Endothelial cell of umbilical vein (primary cell): ENCODE measurements at regions of chr9 and their contacts with region 1.

Region 1: DNA sequence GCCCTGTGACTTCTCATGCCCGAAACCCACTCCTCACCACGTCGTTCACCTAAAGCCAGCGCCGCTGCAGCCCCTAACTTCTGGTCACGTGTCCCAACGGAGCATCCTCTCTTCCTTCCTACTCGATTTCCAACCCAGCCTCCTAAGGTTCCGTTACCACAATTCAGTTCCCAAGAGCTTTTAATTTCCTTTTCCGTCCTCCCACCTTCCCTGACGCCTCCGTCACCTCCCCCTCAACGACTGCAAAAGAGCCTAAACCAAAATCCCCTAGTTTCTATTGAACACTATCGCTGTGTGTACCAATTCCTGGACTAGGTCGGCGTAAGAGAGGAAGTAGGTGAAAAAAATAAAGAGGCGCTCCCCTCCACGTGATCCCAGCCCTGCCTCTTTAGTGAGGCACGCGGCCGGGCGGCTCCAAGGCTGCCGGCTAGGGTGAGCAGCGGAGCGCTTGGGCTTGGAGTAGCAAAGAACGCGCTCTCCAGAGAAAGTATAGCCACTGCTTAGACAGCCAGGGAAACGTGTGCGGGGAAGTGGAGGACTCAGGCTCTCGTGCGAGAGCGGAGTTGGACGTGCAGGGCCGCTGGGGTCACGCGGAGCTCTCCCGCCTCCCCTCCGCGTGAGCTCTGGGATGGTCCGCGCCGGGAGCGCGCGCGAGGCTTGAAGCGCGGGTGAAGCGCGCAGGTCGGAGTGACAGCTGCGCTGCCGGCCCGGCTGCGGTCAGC is at the starts of genes CENPP and NOL8:
- DNase-seq: peak; percentile 93
- H3K4me3 ChIP-seq: peak within 1 kb of the TSS; percentile 32 to 91 (median 67)
- H3K27ac ChIP-seq: peak within 1 kb of the TSS; percentile 89
- H3K4me1 ChIP-seq: peaks cover 13% of the 10 kb centered on the region
- H3K27me3 ChIP-seq: no peaks in the 10 kb centered on the region
- CTCF ChIP-seq: no peak
- POLR2A ChIP-seq: peak; percentile 85
- total RNA-seq, gene CENPP: 8.7 and 12.0 TPM in 2 replicates
- total RNA-seq, gene NOL8: 36.1 and 41.6 TPM in 2 replicates

Region 2: GRCh38 chr9:92234514-92234913 is 90.9 kb before region 1 on chr9:
- CTCF ChIA-PET with region 1: no interaction called
- POLR2A ChIA-PET with region 1: no interaction called
- dilution Hi-C with region 1: no loop called
- intact Hi-C with region 1: no loop called
- DNase-seq: no peak
- H3K4me3 ChIP-seq: no peak overlapping the region
- H3K27ac ChIP-seq: no peak overlapping the region
- H3K4me1 ChIP-seq: no peaks in the 10 kb centered on the region
- H3K27me3 ChIP-seq: no peaks in the 10 kb centered on the region
- CTCF ChIP-seq: no peak
- POLR2A ChIP-seq: no peak

Region 3: GRCh38 chr9:92293452-92294296 is 31.8 kb before region 1 on chr9 and contains the start of gene IARS1:
- CTCF ChIA-PET with region 1: interaction called, 3 read pairs
- POLR2A ChIA-PET with region 1: no interaction called
- dilution Hi-C with region 1: no loop called
- intact Hi-C with region 1: loop called (anchors 1 kb)
- DNase-seq: peak; percentile 99
- H3K4me3 ChIP-seq: peak within 1 kb of the TSS; percentile 76 to 98 (median 78)
- H3K27ac ChIP-seq: peak within 1 kb of the TSS; percentile 64
- H3K4me1 ChIP-seq: peaks cover 23% of the 10 kb centered on the region
- H3K27me3 ChIP-seq: no peaks in the 10 kb centered on the region
- CTCF ChIP-seq: peak in 1 of 2 donors; percentile 40
- POLR2A ChIP-seq: peak; percentile 97
- total RNA-seq, gene IARS1: 130 and 132 TPM in 2 replicates

Region 4: DNA sequence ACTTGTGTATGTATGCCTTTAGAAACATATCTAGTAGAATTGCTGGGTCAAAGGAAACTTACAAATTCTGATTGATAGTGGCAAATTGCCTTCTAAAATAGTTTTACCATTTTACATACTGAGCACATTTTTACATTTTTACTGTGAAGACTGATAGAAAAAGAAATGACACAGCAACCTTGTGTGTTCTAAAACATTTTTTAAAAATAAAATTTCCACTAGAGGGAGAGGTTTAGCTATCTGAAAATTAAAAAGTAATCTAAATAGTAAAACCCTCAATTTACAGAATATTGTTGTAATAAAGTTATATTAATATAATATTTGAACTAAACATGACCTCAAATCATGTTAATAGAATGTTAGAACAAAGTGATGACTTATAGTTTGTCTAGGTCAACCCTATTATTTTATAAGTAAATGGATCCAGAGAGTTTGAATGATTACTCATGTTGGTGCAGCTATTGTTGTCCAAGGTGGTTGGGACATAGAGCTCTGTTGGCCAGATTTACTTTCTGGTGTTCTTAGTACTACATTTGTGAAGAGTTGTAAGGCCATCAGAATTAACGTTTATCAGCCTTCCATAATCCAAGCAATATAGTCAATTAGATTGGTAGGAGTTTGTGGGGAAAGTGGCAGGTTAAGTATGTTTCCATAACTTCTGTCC is 17.5 kb after region 1 on chr9:
- CTCF ChIA-PET with region 1: interaction called, 10 read pairs
- POLR2A ChIA-PET with region 1: no interaction called
- dilution Hi-C with region 1: no loop called
- intact Hi-C with region 1: no loop called
- DNase-seq: peak; percentile 6
- H3K4me3 ChIP-seq: no peak overlapping the region
- H3K27ac ChIP-seq: no peak overlapping the region
- H3K4me1 ChIP-seq: no peaks in the 10 kb centered on the region
- H3K27me3 ChIP-seq: no peaks in the 10 kb centered on the region
- CTCF ChIP-seq: no peak
- POLR2A ChIP-seq: no peak

Region 5: DNA sequence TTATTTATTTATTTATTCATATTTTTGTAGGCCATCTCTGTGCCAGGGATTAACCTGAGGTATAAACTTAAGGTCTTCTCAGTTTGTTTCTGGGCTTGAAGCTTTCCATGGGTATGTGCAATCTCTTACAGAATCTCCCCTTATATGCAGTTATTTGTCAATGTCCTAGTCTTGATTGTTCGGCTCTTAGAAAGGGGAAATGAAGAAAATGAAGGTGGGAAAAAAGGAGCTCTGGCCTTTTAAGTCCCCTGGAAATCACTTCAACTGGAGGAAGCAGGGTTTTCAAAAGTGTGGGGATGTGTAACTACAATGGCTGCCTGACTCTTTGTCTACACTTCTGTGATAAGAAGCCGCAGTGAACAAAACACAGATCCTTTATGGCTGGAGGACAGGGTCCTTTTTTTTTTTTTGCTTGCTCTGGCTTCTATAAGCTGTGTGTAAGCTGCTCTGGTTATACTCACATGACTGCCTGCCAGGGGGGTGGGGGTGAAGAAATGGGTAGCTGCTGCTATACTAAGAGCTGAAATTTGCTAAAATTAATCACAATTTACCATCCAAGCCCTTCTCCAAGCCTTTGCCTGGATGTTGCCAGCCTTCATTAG is 34.1 kb after region 1 on chr9:
- CTCF ChIA-PET with region 1: no interaction called
- POLR2A ChIA-PET with region 1: no interaction called
- dilution Hi-C with region 1: no loop called
- intact Hi-C with region 1: no loop called
- DNase-seq: no peak
- H3K4me3 ChIP-seq: no peak overlapping the region
- H3K27ac ChIP-seq: no peak overlapping the region
- H3K4me1 ChIP-seq: no peaks in the 10 kb centered on the region
- H3K27me3 ChIP-seq: no peaks in the 10 kb centered on the region
- CTCF ChIP-seq: no peak
- POLR2A ChIP-seq: no peak

Region 6: GRCh38 chr9:92438900-92439526 is 113.6 kb after region 1 on chr9:
- CTCF ChIA-PET with region 1: interaction called, 37 read pairs
- POLR2A ChIA-PET with region 1: no interaction called
- dilution Hi-C with region 1: no loop called
- intact Hi-C with region 1: loop called (anchors 2 kb)
- DNase-seq: peak; percentile 38
- H3K4me3 ChIP-seq: no peak overlapping the region
- H3K27ac ChIP-seq: no peak overlapping the region
- H3K4me1 ChIP-seq: no peaks in the 10 kb centered on the region
- H3K27me3 ChIP-seq: no peaks in the 10 kb centered on the region
- CTCF ChIP-seq: no peak
- POLR2A ChIP-seq: no peak

Region 7: DNA sequence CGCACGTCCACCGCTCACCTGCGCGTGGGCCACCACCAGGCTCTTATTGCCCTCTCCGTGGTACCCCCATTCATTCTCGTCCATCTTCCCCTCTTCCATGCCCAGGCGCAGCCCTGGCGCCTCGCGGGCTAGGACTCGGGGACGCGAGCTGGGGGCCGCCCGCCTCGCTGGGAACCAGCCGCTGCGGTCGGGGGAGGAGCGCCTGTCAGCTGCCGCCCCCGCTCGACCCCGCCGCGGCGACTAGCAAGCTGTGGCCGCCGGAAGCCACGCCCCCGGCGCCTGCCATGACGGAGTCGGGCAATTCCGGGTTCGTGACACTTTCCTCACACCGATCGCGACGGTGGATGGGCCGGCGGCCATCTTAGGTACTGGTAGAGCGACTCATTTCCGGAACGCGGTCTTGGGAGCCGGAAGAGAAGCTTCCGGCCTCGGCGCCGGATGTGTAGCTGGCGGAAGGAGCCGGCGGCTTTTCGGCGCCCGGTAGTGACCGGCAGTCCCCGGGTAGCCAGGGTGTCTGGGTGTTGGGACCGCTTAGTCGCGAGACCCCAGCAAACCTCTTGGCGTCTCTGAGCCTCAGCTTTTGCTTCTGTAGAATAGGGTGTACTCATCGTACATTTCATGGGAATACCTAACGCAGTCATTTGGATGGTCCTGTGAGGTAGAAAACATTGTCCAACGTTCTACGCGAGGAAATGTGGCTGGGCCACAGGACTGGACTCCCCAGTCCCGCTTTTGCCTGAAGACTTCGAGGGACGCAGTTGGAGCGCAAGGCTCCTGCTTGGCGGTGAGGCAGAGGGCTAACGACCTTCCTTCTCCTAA is 344.7 kb after region 1 on chr9 and contains the start of gene IPPK:
- CTCF ChIA-PET with region 1: no interaction called
- POLR2A ChIA-PET with region 1: interaction called, 3 read pairs
- dilution Hi-C with region 1: no loop called
- intact Hi-C with region 1: loop called (anchors 1 kb)
- DNase-seq: peak; percentile 98
- H3K4me3 ChIP-seq: peak within 1 kb of the TSS; percentile 50 to 83 (median 77)
- H3K27ac ChIP-seq: peak within 1 kb of the TSS; percentile 97
- H3K4me1 ChIP-seq: peaks cover 16% of the 10 kb centered on the region
- H3K27me3 ChIP-seq: no peaks in the 10 kb centered on the region
- CTCF ChIP-seq: no peak
- POLR2A ChIP-seq: peak; percentile 88
- total RNA-seq, gene IPPK: 12.5 and 14.0 TPM in 2 replicates

Region 8: DNA sequence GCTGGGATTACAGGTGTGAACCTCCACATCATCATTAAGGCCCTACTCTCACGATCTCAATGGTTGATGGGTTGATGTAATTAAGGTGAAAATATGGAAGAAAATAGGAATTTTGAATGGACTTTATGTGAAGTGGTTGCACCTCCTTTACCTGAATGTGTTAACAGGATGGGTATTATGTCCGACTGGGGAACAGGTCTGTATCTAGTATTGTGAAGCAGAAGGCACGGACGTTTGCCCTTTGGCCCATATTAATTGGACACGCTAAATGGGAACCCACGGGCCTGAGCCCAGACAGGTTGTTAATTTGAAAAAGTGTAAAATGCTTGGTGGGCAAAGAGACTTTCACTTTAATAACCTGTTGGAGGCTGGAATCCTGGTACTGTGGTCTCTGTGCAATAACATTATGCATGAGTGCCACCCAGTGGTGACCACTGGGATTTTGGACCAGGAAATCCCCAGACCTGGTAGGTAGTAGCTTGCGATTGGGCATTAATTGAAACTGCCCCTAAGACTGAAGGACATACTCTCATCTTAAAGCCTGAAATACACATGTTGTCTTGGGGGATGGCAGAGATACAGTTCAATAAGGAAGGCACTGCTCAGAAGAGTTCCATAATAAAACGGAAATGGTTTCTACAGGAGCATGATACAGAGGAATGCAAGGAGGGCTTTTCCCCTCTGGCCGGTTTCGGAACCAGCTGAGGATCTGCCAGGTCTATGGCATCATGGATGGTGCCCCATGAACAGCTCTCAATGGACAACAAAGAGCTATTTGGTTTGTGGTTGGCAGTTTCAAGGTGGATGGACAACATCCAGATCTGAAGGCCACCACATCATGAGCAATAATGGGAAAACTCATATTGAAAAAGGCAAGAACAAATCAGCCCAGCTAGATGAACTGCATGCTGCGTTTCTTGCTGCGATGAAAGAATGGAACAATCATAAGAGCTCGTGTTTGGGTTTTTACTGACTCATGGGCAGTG is 465.4 kb after region 1 on chr9:
- CTCF ChIA-PET with region 1: interaction called, 6 read pairs
- POLR2A ChIA-PET with region 1: no interaction called
- dilution Hi-C with region 1: no loop called
- intact Hi-C with region 1: loop called (anchors 5 kb)
- DNase-seq: peak; percentile 84
- H3K4me3 ChIP-seq: no peak overlapping the region
- H3K27ac ChIP-seq: no peak overlapping the region
- H3K4me1 ChIP-seq: no peaks in the 10 kb centered on the region
- H3K27me3 ChIP-seq: peaks cover 4 to 8% of the 10 kb centered on the region in 2 experiments
- CTCF ChIP-seq: peak; percentile 68 to 73
- POLR2A ChIP-seq: no peak